ENCODE measurements at regions of chr15 and their contacts with region 1.

Region 1: DNA sequence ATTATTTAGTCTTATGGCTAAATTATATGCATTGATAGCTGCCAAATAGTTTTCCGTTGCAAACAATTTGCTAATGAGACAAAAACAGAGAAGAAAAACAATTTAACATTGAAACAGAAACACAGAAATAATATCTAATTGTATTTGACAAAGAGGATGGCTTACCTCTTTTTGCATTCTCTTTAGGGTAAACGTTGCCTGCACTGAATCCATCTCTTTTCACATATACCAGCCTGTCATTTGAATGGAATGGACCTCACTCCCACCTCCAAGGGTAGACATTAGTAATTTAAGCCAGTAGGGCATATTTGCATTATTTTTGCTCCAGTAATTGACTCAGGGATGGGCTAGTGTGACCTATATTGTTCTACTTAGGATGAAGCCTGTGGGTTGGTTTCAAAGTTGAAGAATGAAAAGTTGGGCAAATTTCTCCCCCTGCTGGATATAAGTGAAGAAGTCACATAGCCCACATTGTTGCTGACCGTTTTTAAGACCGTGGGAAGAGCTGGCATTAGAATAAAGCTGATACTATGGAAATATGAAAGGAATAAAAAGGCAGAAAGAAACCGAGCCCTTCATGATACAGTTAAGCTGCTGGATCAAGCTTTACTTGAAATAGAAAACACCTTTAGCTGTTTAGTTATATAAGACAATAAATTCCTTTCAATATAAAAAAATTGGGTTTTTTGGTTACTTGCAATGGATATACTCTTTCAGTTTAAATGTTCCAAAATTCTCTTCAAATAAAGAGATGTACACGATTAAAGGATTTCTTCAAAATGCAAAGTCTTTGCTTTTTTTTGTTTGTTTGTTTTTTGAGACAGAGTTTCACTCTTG is 26.9 kb downstream of the PIERCE2 start:
- DNase-seq: peak; percentile 8
- ATAC-seq: peak; percentile 66
- H3K4me3 Mint-ChIP-seq: no peak overlapping the region
- H3K27ac Mint-ChIP-seq: no peak overlapping the region
- H3K4me1 Mint-ChIP-seq: peaks cover 3% of the 10 kb centered on the region
- H3K27me3 Mint-ChIP-seq: no peaks in the 10 kb centered on the region

Region 2: GRCh38 chr15:53962332-53963241 is 1472.6 kb before region 1 on chr15:
- CTCF ChIA-PET with region 1: interaction called, 6 read pairs
- POLR2A ChIA-PET with region 1: no interaction called
- intact Hi-C with region 1: loop called in 1 of 2 experiments (anchors 5 kb)
- DNase-seq: peak; percentile 59
- ATAC-seq: no peak
- H3K4me3 Mint-ChIP-seq: no peak overlapping the region
- H3K27ac Mint-ChIP-seq: no peak overlapping the region
- H3K4me1 Mint-ChIP-seq: no peaks in the 10 kb centered on the region
- H3K27me3 Mint-ChIP-seq: peaks cover 6% of the 10 kb centered on the region

Region 3: GRCh38 chr15:55196458-55197361 is 238.5 kb before region 1 on chr15 and contains the start of gene RSL24D1:
- CTCF ChIA-PET with region 1: interaction called, 4 read pairs
- POLR2A ChIA-PET with region 1: no interaction called
- intact Hi-C with region 1: loop called in 1 of 2 experiments (anchors 2 kb)
- DNase-seq: peak; percentile 97
- ATAC-seq: peak; percentile 99
- H3K4me3 Mint-ChIP-seq: no peak within 1 kb of the TSS
- H3K27ac Mint-ChIP-seq: no peak within 1 kb of the TSS
- H3K4me1 Mint-ChIP-seq: peaks cover 17% of the 10 kb centered on the region
- H3K27me3 Mint-ChIP-seq: no peaks in the 10 kb centered on the region
- total RNA-seq, gene RSL24D1: 152 to 188 TPM

Region 4: DNA sequence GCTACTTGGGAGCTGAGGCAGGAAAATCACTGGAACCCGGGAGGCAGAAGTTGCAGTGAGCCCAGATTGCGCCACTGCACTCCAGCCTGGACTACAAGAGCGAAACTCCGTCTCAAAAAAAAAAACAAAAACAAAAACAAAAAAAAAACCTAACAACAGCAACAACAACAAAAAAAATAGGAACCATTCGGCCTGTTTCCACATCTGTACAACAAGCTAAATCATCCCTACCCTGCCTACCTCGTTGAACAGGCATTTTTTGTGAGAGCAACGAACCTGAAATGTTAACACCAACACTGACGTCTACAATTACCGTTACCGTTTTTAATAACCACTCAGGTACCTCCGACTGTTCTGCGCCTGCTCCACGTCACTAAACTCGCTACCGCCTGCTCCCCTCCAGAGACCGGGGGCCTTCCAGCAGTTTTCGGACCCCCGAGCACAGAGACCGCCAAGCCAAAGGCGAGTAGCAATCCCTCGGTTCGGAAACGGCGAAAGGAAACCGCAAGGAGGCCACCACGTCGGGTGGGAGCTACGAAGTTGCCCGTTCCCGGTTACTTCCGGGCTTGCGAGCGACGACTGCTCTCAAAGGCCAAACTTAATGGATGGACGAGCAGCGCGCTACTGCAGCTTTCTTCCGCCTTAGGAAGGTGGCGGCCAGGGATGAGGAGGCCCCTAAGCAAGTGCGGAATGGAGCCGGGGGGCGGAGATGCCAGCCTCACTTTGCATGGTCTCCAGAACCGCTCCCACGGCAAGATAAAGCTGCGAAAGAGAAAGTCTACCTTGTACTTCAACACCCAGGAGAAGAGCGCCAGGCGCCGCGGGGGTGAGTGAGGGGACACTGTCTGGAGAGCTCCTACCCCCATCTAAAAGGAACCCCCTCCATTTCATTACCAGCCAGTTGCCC is 116.4 kb before region 1 on chr15 and contains the starts of genes PIGB and PIGBOS1:
- CTCF ChIA-PET with region 1: interaction called, 5 read pairs
- POLR2A ChIA-PET with region 1: interaction called, 3 read pairs
- intact Hi-C with region 1: loop called in 1 of 2 experiments (anchors 2 kb)
- DNase-seq: peak; percentile 88
- ATAC-seq: peak; percentile 89
- H3K4me3 Mint-ChIP-seq: peak within 1 kb of the TSS; percentile 97
- H3K27ac Mint-ChIP-seq: peak within 1 kb of the TSS; percentile 99
- H3K4me1 Mint-ChIP-seq: peaks cover 51% of the 10 kb centered on the region
- H3K27me3 Mint-ChIP-seq: no peaks in the 10 kb centered on the region
- total RNA-seq, gene PIGB: 19.8 to 21.1 TPM
- total RNA-seq, gene PIGBOS1: 8.8 to 11.0 TPM

Region 5: GRCh38 chr15:55457401-55458022 is 22.3 kb after region 1 on chr15:
- CTCF ChIA-PET with region 1: interaction called, 10 read pairs
- POLR2A ChIA-PET with region 1: no interaction called
- intact Hi-C with region 1: no loop called
- DNase-seq: no peak
- ATAC-seq: no peak
- H3K4me3 Mint-ChIP-seq: no peak overlapping the region
- H3K27ac Mint-ChIP-seq: no peak overlapping the region
- H3K4me1 Mint-ChIP-seq: no peaks in the 10 kb centered on the region
- H3K27me3 Mint-ChIP-seq: peaks cover 2% of the 10 kb centered on the region

Region 6: GRCh38 chr15:55484917-55485672 is 49.9 kb after region 1 on chr15:
- CTCF ChIA-PET with region 1: no interaction called
- POLR2A ChIA-PET with region 1: no interaction called
- intact Hi-C with region 1: no loop called
- DNase-seq: no peak
- ATAC-seq: no peak
- H3K4me3 Mint-ChIP-seq: no peak overlapping the region
- H3K27ac Mint-ChIP-seq: no peak overlapping the region
- H3K4me1 Mint-ChIP-seq: no peaks in the 10 kb centered on the region
- H3K27me3 Mint-ChIP-seq: no peaks in the 10 kb centered on the region

Region 7: DNA sequence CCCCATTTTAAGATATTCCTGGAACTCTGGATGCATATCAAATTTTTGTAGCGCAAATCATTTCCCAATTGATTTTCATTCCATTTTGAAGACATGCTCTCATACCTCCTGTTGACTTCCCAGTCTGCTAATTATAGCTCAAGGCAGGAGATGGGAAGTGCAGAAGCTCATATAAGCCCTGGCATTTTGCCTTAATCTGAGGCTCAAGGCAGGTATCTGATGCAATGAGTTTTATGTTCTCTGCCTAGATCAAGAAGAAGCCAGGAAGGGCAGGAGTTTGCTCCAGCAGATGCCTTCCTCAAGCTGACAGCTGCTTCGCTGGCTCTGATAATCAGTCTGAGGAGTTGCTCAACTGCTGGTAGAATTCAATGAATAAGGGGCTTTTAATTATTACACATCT is 623.8 kb after region 1 on chr15:
- CTCF ChIA-PET with region 1: no interaction called
- POLR2A ChIA-PET with region 1: no interaction called
- intact Hi-C with region 1: no loop called
- DNase-seq: no peak
- ATAC-seq: no peak
- H3K4me3 Mint-ChIP-seq: no peak overlapping the region
- H3K27ac Mint-ChIP-seq: no peak overlapping the region
- H3K4me1 Mint-ChIP-seq: no peaks in the 10 kb centered on the region
- H3K27me3 Mint-ChIP-seq: no peaks in the 10 kb centered on the region